Esophagus squamous epithelium (tissue), 5 donors: ENCODE measurements at regions of chr15 and their contacts with region 1.

Region 1: DNA sequence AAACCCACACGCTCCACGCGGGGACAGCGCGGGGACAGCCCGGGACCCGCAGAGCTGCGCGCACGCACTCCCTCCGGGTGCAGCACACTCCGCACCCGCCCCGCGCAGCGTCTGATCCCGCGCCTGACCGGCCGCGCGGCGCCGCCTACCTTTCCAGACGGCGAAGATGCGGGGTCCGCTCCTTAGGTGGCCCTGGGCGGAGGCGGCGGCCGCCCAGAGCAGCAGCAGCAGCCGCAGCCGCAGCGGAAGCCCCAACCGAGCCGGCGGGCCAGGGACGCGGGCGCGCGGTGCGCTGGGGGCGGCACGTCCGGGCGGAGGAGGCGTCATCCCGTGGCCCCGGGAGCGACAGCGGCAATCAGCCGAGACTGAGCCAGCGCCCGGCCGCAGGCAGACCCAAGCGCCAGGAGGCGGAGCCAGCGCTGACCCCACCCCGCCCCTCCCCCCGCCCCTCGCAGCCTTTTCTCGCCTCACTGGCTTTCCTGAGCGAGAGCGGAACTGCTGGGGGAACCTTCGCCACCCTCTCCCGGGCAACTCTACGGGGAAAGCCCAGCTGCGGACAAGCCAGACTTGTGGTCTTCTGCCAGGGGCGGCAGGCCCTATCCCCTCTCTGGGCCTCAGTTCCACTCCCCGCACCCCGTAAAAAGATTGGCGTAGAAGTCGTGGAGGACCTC is at the start of gene SEMA7A:
- DNase-seq: no peak
- H3K4me3 ChIP-seq: peak within 1 kb of the TSS; percentile 47 to 90 (median 58)
- H3K27ac ChIP-seq: peak within 1 kb of the TSS; percentile 62 to 81 (median 72)
- H3K4me1 ChIP-seq: peaks cover 6 to 40% (median 10%) of the 10 kb centered on the region in 3 donors
- H3K27me3 ChIP-seq: peaks cover 0 to 54% (median 8%) of the 10 kb centered on the region in 4 donors
- CTCF ChIP-seq: peak in 1 of 6 experiments; percentile 5
- POLR2A ChIP-seq: peak in 2 of 4 donors; percentile 58 to 85
- total RNA-seq, gene SEMA7A: 1.2 to 7.5 (median 2.9) TPM

Region 2: GRCh38 chr15:74382004-74382816 is 51.5 kb before region 1 on chr15:
- intact Hi-C with region 1: loop called (anchors 2 kb)
- DNase-seq: no peak
- H3K4me3 ChIP-seq: no peak overlapping the region
- H3K27ac ChIP-seq: no peak overlapping the region
- H3K4me1 ChIP-seq: peaks cover 13 to 55% (median 23%) of the 10 kb centered on the region in 3 donors
- H3K27me3 ChIP-seq: peaks cover 0 to 15% (median 0%) of the 10 kb centered on the region in 4 donors
- CTCF ChIP-seq: peak; percentile 90 to 96 (median 94)
- POLR2A ChIP-seq: no peak